Tibial artery (tissue), 4 donors: ENCODE measurements at regions of chr10 and their contacts with region 1.

Region 1: GRCh38 chr10:75000748-75001321 is 110.6 kb upstream of the SAMD8 start:
- DNase-seq: no peak
- H3K4me3 ChIP-seq: no peak overlapping the region
- H3K27ac ChIP-seq: no peak overlapping the region
- H3K4me1 ChIP-seq: no peaks in the 10 kb centered on the region
- H3K27me3 ChIP-seq: no peaks in the 10 kb centered on the region
- CTCF ChIP-seq: no peak

Region 2: DNA sequence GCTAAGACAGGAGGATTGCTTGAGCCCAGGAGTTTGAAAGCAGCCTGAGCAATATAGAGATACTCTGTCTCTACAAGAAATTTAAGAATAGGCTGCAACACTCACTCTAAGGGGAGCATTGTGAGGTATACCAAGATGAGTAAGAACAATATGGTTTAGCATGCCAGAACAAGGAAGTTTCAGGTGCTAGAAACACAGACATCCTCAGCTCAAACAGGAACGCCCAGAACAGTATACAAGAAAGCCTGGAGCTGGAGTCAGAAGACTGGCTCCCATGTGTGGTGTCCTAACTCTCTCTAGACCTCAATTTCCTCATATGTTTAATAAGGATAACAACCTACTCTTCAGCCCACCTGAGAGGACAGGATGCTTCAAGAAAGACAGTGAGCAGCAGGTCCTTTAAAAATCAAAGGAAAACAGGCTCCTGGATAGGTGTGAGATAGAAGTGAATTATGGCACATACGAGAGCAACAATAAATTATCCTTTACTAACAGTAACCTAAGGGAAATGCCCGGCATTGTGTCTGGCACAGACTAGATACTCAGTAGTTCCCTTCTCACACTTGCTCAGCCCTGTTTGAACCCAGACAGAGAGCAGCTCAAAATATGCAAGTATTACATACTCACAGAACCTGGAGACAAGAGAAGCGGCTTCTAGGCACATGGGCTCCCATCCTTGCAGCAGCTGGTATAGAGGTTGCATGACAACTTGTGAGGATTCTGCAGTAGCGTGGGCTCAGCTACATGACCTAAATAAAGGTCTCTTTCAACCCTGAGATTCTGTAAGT is 129.0 kb before region 1 on chr10:
- intact Hi-C with region 1: loop called (anchors 10 kb)
- DNase-seq: no peak
- H3K4me3 ChIP-seq: no peak overlapping the region
- H3K27ac ChIP-seq: no peak overlapping the region
- H3K4me1 ChIP-seq: peaks cover 0 to 35% (median 2%) of the 10 kb centered on the region in 4 donors
- H3K27me3 ChIP-seq: no peaks in the 10 kb centered on the region
- CTCF ChIP-seq: no peak

Region 3: GRCh38 chr10:74924251-74924951 is 76.4 kb before region 1 on chr10:
- intact Hi-C with region 1: no loop called
- DNase-seq: no peak
- H3K4me3 ChIP-seq: peak overlapping the region; percentile 7 to 14
- H3K27ac ChIP-seq: peak overlapping the region; percentile 42 to 53
- H3K4me1 ChIP-seq: peaks cover 0 to 70% (median 33%) of the 10 kb centered on the region in 4 donors
- H3K27me3 ChIP-seq: no peaks in the 10 kb centered on the region
- CTCF ChIP-seq: no peak